ENCODE measurements at regions of chr9 and their contacts with region 1.

Region 1: DNA sequence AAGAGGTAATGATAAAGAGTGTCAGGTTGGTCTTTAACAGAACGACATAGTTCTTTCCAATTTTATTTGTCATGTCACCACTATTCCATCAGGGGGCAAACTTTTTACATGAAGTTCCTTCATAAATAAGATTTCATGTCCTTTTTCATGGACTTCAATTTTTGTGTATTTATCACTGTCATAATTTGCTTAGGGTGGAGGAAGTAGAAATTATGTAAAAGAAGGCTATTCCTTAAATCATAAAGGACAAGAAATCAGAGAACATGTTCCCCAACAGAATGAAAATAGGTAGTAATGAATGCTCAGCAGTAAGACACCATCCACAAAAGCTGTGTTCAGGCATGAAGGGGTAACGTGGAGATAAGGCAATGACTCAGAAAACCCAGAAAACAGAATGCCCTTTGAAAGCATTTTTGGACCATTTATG is 72.7 kb downstream of the ZFAND5 start:
- DNase-seq: no peak
- ATAC-seq: peak; percentile 72
- H3K4me3 ChIP-seq: no peak overlapping the region
- H3K27ac ChIP-seq: no peak overlapping the region
- H3K4me1 ChIP-seq: peaks cover 0 to 20% of the 10 kb centered on the region in 2 experiments; a peak in 3 of 4 replicates
- H3K27me3 ChIP-seq: no peaks in the 10 kb centered on the region
- CTCF ChIP-seq: peak; percentile 41 to 72 (median 61); a peak in 4 of 6 replicates
- POLR2A ChIP-seq: no peak
- RAD21 ChIP-seq: peak; percentile 81

Region 2: DNA sequence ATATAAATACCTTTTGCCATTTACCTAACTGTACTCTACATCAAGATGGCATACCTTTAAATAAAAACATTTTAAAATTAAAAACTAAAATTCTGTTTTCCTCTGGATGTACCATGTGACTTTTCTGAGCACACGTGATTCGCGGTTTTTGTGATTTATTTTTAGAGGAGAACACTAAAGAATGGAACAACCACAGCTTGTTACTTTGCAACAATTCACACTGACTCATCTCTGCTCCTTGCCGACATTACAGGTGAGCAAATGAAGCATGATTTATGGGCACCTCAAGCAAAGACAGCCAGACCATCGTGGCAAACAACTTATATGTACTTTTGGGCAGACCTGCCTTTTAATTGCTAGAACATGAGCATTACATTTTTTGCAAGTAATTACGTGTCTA is 81.7 kb before region 1 on chr9:
- CTCF ChIA-PET with region 1: no interaction called
- POLR2A ChIA-PET with region 1: no interaction called
- RAD21 ChIA-PET with region 1: no interaction called
- intact Hi-C with region 1: no loop called
- DNase-seq: no peak
- ATAC-seq: no peak
- H3K4me3 ChIP-seq: no peak overlapping the region
- H3K27ac ChIP-seq: no peak overlapping the region
- H3K4me1 ChIP-seq: no peaks in the 10 kb centered on the region
- H3K27me3 ChIP-seq: no peaks in the 10 kb centered on the region
- CTCF ChIP-seq: no peak
- POLR2A ChIP-seq: no peak
- RAD21 ChIP-seq: no peak

Region 3: DNA sequence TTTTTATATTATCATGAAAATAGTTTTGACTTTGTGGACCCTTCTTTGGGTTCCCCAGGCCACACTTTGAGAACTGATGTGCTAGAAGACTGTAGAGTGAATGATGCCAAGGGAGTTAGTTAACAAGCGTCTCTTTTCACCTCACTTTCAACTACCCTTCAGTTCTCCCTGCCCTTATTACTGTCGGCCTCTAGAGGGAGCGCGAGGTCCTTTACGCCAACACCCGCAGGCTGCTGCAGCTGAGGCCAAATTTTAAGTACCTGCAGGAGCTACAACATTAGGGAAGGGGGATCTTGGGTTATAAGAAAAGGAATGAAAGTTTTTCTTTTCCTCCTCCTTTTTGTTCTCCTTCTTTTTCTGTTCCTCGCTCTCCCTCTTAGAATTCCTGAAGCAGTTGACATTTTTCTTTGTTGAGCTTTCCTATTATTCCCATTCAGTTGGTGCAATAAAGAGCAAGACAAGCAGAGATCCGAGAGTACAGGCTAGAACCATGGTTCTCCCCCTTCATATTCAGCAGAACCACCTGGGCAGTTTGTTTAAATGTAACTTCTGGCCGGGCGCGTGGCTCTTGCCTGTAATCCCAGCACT is 11.3 kb before region 1 on chr9:
- CTCF ChIA-PET with region 1: interaction called, 11 read pairs
- POLR2A ChIA-PET with region 1: no interaction called
- RAD21 ChIA-PET with region 1: no interaction called
- intact Hi-C with region 1: no loop called
- DNase-seq: peak; percentile 60
- ATAC-seq: peak; percentile 98
- H3K4me3 ChIP-seq: no peak overlapping the region
- H3K27ac ChIP-seq: no peak overlapping the region
- H3K4me1 ChIP-seq: no peaks in the 10 kb centered on the region
- H3K27me3 ChIP-seq: no peaks in the 10 kb centered on the region
- CTCF ChIP-seq: peak; percentile 91 to 96 (median 91)
- POLR2A ChIP-seq: no peak
- RAD21 ChIP-seq: peak; percentile 96

Region 4: DNA sequence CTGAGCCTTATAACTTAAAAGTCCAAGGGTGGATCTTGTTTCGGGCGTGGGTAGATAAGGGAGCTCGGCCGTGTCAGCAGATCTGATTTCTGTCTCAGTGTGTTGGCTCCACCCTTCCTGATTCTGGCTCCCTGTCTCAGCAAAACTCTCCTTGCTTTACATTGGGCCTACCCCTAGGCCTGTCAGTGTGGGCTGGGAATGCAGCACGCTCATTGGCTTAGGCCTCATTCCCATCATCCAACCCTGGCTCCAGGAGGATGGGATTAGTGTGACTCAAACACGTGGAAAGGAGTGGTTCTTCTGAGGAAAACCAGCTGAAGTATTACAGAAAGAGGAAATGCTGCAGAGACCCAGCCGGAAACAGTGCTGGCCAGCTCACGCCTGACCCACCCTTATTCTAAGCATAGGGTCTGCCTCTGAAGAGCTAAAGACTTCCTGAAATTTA is 12.9 kb after region 1 on chr9:
- CTCF ChIA-PET with region 1: no interaction called
- POLR2A ChIA-PET with region 1: interaction called, 10 read pairs
- RAD21 ChIA-PET with region 1: no interaction called
- intact Hi-C with region 1: no loop called
- DNase-seq: peak; percentile 95
- ATAC-seq: peak; percentile 100
- H3K4me3 ChIP-seq: peak overlapping the region; percentile 49 to 54
- H3K27ac ChIP-seq: no peak overlapping the region; the same call in 1 of the 2 replicates
- H3K4me1 ChIP-seq: peaks cover 4 to 29% of the 10 kb centered on the region in 2 experiments
- H3K27me3 ChIP-seq: no peaks in the 10 kb centered on the region
- CTCF ChIP-seq: no peak
- POLR2A ChIP-seq: peak; percentile 6
- RAD21 ChIP-seq: no peak

Region 5: DNA sequence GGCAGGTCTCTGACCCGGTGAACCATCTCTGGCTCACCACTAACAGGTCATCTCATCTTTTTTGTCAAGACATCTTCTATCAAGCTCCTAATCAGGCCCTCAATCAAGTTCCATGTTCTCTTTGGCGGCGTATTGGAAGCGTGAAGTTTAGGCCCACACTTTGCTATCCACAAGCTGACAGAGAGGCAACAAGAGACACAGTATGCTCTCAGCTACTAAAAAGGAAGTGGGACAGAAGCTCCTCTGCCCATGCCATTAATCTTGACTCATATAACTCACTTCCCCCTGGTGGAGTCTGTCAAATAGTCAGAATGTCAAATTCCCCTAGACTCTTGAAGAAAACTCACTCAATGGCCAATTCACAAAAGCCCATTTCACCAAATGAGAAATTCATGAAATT is 151.6 kb after region 1 on chr9:
- CTCF ChIA-PET with region 1: no interaction called
- POLR2A ChIA-PET with region 1: no interaction called
- RAD21 ChIA-PET with region 1: no interaction called
- intact Hi-C with region 1: loop called (anchors 5 kb)
- DNase-seq: no peak
- ATAC-seq: no peak; the same call in 1 of the 2 replicates
- H3K4me3 ChIP-seq: no peak overlapping the region
- H3K27ac ChIP-seq: no peak overlapping the region
- H3K4me1 ChIP-seq: peaks cover 19 to 34% of the 10 kb centered on the region in 2 experiments
- H3K27me3 ChIP-seq: no peaks in the 10 kb centered on the region
- CTCF ChIP-seq: no peak
- POLR2A ChIP-seq: no peak
- RAD21 ChIP-seq: no peak

Region 6: GRCh38 chr9:72753266-72753893 is 461.1 kb after region 1 on chr9:
- CTCF ChIA-PET with region 1: interaction called, 7 read pairs
- POLR2A ChIA-PET with region 1: no interaction called
- RAD21 ChIA-PET with region 1: interaction called in 1 of 2 experiments, 3 read pairs
- intact Hi-C with region 1: loop called (anchors 1 kb)
- DNase-seq: no peak
- ATAC-seq: peak; percentile 52
- H3K4me3 ChIP-seq: no peak overlapping the region
- H3K27ac ChIP-seq: no peak overlapping the region
- H3K4me1 ChIP-seq: peaks cover 0 to 5% of the 10 kb centered on the region in 2 experiments; a peak in 1 of 4 replicates
- H3K27me3 ChIP-seq: no peaks in the 10 kb centered on the region
- CTCF ChIP-seq: peak in 2 of 3 experiments; percentile 41 to 46; a peak in 3 of 6 replicates
- POLR2A ChIP-seq: no peak
- RAD21 ChIP-seq: peak; percentile 75